ENCODE measurements at regions of chr16 and their contacts with region 1.

Region 1: DNA sequence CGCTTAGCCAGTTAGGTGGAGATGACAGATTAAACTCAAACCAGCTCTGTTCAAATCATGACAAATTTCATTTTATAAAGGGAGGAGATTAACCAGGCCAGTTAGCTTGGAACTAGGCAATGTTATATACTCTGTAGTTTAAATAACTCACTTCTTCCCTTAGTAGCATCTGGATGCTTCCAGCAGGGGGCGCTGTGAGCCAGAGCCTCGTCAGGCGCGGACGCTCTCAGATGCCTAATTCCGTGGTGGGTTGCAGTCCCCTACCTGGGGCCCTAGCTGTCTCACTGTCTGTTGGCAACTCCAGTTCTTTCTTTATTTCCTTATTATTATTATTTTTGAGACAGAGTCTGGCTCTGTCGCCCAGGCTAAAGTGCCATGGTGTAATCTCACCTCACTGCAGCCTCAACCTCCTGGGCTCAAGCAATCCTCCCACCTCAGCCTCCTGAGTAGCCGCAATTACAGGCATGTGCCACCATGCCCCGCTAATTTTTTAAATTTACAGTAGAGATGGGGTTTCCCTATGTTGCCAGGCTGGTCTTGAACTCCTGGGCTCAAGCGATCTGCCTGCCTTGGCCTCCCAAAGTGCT is 17.3 kb upstream of the WFDC1 start:
- DNase-seq: peak; percentile 92
- H3K4me3 Mint-ChIP-seq: no peak overlapping the region
- H3K27ac Mint-ChIP-seq: no peak overlapping the region
- H3K4me1 Mint-ChIP-seq: no peaks in the 10 kb centered on the region
- H3K27me3 Mint-ChIP-seq: peaks cover 4% of the 10 kb centered on the region

Region 2: GRCh38 chr16:83994087-83994486 is 283.2 kb before region 1 on chr16:
- intact Hi-C with region 1: no loop called
- DNase-seq: no peak
- H3K4me3 Mint-ChIP-seq: no peak overlapping the region
- H3K27ac Mint-ChIP-seq: no peak overlapping the region
- H3K4me1 Mint-ChIP-seq: no peaks in the 10 kb centered on the region
- H3K27me3 Mint-ChIP-seq: peaks cover 8% of the 10 kb centered on the region

Region 3: DNA sequence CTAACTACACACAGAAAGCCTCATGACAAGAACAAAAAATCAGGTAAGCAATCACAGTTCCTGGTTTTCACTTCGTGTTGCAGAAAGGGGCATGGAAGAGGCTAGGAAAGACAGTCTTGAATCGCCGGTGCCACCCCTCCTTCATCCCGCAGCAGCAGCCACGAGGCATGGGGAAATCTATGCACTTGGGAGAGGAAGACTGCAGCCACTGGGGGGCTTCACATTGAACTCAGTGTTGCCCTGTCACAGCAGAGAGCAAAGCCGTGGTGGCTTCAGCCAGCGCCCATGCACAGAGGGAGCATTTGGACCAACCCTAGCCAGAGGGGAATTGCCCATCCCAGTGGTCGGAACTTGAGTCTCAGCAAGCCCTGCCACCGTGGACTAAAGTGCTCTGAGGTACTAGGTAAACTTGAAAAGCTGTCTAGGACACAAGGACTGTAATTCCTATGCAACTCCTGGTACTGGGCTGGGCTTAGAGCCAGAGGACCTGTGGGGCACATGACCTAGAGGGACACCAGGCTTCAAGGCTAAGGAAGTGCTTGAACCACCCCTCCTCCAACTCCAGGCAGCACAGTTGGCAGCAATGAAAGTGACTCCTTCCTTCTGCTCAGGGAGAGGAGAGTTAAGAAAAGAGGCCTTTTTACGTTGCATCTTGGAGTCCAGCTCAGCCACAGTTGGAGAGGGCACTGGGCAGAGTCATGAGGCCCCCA is 55.8 kb after region 1 on chr16:
- intact Hi-C with region 1: no loop called
- DNase-seq: no peak
- H3K4me3 Mint-ChIP-seq: no peak overlapping the region
- H3K27ac Mint-ChIP-seq: no peak overlapping the region
- H3K4me1 Mint-ChIP-seq: no peaks in the 10 kb centered on the region
- H3K27me3 Mint-ChIP-seq: peaks cover 7% of the 10 kb centered on the region

Region 4: DNA sequence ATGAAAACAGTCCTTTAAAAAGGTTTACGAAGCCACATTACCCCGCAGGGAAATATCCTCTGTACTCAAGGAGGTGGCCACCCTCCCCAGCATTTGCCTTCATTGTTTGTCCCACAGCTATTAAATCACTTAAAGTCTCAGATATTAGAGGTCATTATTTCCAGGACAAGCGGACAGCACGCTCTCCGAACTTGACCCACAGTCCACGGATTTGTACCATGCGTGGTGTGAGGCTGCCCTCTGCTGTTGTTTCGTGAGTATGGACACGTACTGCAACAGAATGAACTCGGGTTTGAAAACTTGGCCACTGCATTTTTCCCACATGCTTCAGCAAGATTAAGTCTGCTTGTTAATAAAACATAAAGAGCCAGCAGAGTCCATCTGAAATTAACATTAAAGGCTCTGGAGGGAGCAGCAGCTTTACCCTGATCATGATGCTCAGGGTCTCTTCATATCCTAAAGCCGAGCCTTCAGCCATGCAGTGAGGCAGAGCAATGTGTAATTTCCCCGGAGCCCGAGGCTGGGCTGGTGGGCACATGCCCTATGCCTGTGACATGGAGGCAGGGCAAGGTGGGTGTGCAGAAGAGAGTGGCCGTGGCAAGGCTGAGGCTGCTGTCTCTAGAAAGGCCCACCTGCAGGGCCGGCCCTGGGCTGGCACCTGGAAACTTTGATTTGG is 207.4 kb after region 1 on chr16:
- intact Hi-C with region 1: loop called (anchors 2 kb)
- DNase-seq: peak; percentile 68
- H3K4me3 Mint-ChIP-seq: no peak overlapping the region
- H3K27ac Mint-ChIP-seq: no peak overlapping the region
- H3K4me1 Mint-ChIP-seq: peaks cover 2% of the 10 kb centered on the region
- H3K27me3 Mint-ChIP-seq: no peaks in the 10 kb centered on the region

Region 5: GRCh38 chr16:84504420-84505248 is 227.3 kb after region 1 on chr16 and contains the start of gene MEAK7:
- intact Hi-C with region 1: loop called (anchors 1 kb)
- DNase-seq: peak; percentile 100
- H3K4me3 Mint-ChIP-seq: peak within 1 kb of the TSS; percentile 83
- H3K27ac Mint-ChIP-seq: peak within 1 kb of the TSS; percentile 87
- H3K4me1 Mint-ChIP-seq: peaks cover 41% of the 10 kb centered on the region
- H3K27me3 Mint-ChIP-seq: no peaks in the 10 kb centered on the region
- total RNA-seq, gene MEAK7: 11.7 and 12.5 TPM in 2 replicates

Measured in activated CD4-positive, alpha-beta T cell treated with anti-CD3 and anti-CD28 coated beads, Interleukin-2, amount 10 ng/mL, durations not matched to agents 24 days and 14 days (primary cell).